Activated naive CD4-positive, alpha-beta T cell treated with anti-CD3 and anti-CD28 coated beads, Interleukin-2, amount 10 ng/mL, durations not matched to agents 7 days and 5 days (primary cell): ENCODE measurements at regions of chr16 and their contacts with region 1.

Region 1: DNA sequence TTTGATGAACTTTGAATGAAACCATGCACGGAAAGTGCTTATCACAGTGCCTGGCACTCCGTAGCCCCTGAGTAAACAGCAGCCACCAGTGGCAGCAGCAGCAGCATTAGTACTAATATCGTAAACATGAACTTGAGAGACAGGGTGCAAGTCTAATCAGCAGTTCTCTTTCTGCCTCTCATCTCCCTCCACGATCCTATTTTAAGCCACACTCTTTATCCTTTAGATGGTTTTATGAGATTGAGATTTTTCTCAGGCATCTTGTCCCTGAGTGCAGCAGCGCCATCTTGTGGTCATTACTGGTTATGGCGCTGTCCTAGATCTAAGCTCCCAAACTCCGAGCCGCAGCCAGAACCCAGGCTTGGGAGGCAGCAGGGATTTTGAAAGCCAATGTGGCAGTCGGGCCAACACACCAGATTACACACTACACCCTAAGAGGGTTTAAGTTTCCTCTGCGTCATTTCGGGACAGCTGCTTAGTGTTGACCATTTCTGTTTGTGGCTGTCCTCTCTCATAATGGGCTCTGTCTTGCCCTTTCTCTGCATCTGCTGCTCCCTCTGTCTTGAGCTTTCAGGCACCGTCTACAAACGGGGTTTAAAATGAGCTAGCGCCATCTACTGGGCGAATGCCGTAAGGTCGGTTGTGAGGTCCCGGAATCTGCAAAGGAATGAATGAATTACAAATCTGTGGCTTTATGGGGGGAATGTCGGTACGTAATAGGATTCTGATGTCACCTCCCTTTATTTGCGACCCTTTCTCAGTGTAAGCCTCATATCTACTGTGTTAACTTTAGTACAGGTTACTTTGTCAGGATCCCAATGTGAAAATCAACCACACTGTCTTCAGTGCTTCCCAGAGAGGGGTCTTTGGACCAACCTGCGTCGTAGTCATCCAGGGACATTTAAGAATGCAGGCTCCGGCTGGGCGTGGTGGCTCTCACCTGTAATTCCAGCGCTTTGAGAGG is 64.5 kb downstream of the CYLD start:
- DNase-seq: peak; percentile 89
- H3K4me3 Mint-ChIP-seq: peak overlapping the region; percentile 45
- H3K27ac Mint-ChIP-seq: peak overlapping the region; percentile 67
- H3K4me1 Mint-ChIP-seq: peaks cover 15% of the 10 kb centered on the region
- H3K27me3 Mint-ChIP-seq: peaks cover 3% of the 10 kb centered on the region

Region 2: DNA sequence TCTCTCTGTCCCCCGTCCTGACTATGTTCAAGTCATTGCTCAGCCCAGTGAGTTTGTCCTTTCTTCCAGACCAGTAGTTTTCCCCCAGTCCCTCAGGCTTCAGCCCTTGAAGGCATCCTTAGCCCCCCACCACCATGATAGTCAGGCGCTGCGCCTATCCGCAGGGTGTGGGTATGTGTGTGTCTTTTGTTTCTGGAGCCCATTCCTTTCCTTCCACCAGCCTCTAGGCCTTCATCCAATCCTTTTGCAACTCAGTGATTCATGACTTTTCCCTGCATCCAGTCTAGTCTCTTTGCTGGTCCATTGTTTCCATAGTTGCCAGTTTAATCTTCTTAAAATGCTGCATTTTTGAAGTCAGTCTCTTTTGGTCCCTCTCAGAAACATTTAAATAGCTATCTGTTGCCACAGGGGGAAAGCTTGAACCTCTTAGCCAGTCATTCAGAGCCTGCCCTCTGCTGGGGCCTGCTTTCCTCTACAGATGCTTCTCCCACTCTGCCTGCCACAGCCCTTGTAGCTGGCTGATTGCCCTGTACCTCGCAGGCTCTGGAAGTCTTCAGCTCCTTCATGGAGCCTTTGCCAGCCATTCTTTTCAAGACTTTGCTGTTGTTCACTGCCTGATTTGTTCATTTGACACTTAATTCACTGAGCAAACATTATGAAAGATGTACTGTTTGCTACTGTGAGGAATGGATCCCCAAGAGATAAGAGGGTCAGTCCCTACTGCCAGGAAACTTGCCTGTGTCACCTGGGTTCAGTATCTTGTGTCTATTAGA is 595.9 kb before region 1 on chr16:
- CTCF ChIA-PET with region 1: interaction called, 30 read pairs
- DNase-seq: peak; percentile 84
- H3K4me3 Mint-ChIP-seq: no peak overlapping the region
- H3K27ac Mint-ChIP-seq: no peak overlapping the region
- H3K4me1 Mint-ChIP-seq: peaks cover 29% of the 10 kb centered on the region
- H3K27me3 Mint-ChIP-seq: no peaks in the 10 kb centered on the region

Region 3: DNA sequence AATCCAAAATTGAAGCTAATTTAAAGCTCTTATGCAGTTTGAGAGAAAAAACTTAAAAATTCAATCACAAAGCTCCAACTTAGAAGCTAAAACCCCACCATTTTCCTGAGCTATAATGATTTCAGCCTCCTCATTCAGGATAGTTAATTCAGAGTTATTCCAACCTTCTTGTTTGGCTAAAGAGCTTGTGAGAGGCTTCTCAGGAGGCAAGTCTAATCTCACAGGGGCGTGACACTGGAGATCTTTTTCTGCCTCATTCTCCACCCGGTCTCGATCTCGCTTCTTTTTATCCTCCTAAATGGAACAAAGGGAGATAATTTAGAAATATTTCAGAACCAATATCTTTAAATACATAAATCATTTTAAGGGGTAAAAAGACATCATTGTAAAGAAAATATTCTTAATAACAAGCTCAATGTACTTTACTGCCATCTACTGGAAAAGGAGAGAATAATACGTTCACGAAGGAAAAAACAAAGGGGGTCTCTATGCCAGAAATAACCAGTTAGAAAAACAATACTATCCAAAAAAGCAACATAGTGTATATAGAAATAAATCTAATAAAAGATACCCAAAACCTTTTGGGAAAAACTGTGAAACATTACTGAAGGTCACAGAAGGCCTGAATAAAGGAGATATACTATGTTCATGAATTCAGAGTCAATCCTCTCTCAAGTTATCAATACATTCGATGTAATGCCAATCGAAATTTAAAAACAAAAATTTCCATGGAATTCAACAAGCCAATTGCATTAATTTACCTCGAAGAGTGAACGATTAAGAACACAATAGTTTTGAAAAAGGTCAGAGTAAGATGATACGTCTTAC is 451.5 kb before region 1 on chr16:
- CTCF ChIA-PET with region 1: interaction called, 21 read pairs
- DNase-seq: no peak
- H3K4me3 Mint-ChIP-seq: no peak overlapping the region
- H3K27ac Mint-ChIP-seq: peak overlapping the region; percentile 60
- H3K4me1 Mint-ChIP-seq: peaks cover 22% of the 10 kb centered on the region
- H3K27me3 Mint-ChIP-seq: no peaks in the 10 kb centered on the region

Region 4: DNA sequence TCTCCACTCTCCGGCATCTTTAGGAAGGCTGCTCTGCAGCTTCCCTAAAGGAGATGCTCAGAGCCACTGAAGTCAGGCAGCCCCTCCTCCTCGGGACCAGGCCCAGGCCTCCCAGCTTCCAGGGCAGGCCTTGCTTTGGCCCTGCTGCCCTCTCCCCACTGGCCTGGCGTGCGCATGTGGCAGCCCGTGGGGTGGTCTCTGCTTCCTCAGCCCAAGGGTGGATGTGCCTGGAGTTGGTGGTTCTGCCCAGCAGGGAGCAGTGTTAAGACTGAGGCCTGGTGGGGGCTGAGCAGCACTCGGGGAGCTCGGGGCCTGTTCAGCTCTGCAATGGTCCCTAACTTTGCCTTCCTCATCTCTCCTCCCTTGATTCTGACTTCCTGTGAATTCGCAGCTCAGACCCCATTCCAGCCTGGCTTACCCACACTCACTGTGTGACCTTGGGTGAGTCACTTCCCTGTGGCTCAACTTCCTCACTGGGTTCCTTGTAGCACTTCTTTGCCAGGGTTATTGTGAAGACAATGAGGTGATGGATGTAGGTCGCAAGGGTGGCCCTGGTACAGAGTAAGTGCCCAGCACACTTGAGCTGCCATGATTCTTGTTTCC is 194.9 kb before region 1 on chr16:
- CTCF ChIA-PET with region 1: interaction called, 11 read pairs
- DNase-seq: no peak
- H3K4me3 Mint-ChIP-seq: no peak overlapping the region
- H3K27ac Mint-ChIP-seq: no peak overlapping the region
- H3K4me1 Mint-ChIP-seq: peaks cover 6% of the 10 kb centered on the region
- H3K27me3 Mint-ChIP-seq: peaks cover 4% of the 10 kb centered on the region

Region 5: GRCh38 chr16:50747207-50747956 is 59.0 kb before region 1 on chr16:
- CTCF ChIA-PET with region 1: interaction called, 20 read pairs
- DNase-seq: peak; percentile 34
- H3K4me3 Mint-ChIP-seq: peak overlapping the region; percentile 81
- H3K27ac Mint-ChIP-seq: peak overlapping the region; percentile 92
- H3K4me1 Mint-ChIP-seq: peaks cover 60% of the 10 kb centered on the region
- H3K27me3 Mint-ChIP-seq: no peaks in the 10 kb centered on the region